ENCODE measurements at regions of chr12 and their contacts with region 1.

Region 1: GRCh38 chr12:76031537-76032073 is at the start of gene PHLDA1:
- DNase-seq: peak; percentile 84 to 86
- ATAC-seq: peak; percentile 73 to 80
- H3K4me3 ChIP-seq: peak within 1 kb of the TSS; percentile 77 to 88 (median 85)
- H3K27ac ChIP-seq: peak within 1 kb of the TSS; percentile 86 to 95 (median 92)
- H3K4me1 ChIP-seq: peaks cover 8 to 20% of the 10 kb centered on the region in 2 donors
- H3K27me3 ChIP-seq: peaks cover 0 to 40% (median 22%) of the 10 kb centered on the region in 3 donors
- CTCF ChIP-seq: peak; percentile 29 to 63 (median 55)
- POLR2A ChIP-seq: peak; percentile 64 to 91
- total RNA-seq, gene PHLDA1: 2.4 to 32.7 (median 7.9) TPM

Region 2: DNA sequence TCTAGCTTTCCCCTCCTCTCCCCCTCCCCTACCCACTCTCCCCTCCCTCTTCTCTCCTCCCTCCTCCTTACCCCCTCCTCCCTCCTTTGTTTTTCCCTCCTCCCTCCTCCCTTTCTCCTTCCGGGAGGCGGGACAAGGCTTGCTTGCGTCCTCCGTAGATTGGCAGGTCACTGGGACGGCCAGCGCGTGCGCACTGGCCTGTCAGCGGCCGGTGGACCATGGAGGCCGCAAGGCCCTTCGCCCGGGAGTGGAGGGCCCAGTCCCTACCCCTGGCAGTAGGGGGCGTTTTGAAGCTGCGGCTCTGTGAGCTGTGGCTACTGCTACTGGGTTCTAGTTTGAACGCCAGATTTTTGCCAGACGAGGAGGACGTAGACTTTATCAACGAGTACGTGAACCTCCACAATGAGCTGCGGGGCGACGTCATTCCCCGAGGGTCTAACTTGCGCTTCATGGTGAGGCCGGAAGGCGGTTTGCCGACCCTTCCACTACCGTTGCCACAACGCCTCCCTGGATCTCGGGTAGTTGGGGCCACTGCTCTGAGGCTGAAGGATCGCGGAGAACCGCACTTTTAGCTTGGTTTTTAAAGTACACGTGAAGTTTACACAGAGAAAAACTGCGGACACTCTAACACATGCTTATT is 640.6 kb before region 1 on chr12 and contains the start of gene GLIPR1L2:
- in situ Hi-C with region 1: loop called in 1 of 4 experiments (anchors 25 kb)
- intact Hi-C with region 1: no loop called
- DNase-seq: peak; percentile 90 to 95
- ATAC-seq: peak; percentile 96 to 98
- H3K4me3 ChIP-seq: peak within 1 kb of the TSS; percentile 65 to 84 (median 76)
- H3K27ac ChIP-seq: peak within 1 kb of the TSS; percentile 84 to 93 (median 90)
- H3K4me1 ChIP-seq: peaks cover 23 to 24% of the 10 kb centered on the region in 2 donors
- H3K27me3 ChIP-seq: no peaks in the 10 kb centered on the region
- CTCF ChIP-seq: peak; percentile 73 to 86 (median 79)
- POLR2A ChIP-seq: peak; percentile 68 to 77
- total RNA-seq, gene GLIPR1L2: 0.33 to 1.0 (median 0.49) TPM in 3 of 4 donors, not detected in the other

Region 3: GRCh38 chr12:75526655-75527511 is 504.7 kb before region 1 on chr12:
- in situ Hi-C with region 1: loop called (anchors 5 to 25 kb)
- intact Hi-C with region 1: no loop called
- DNase-seq: no peak
- ATAC-seq: no peak
- H3K4me3 ChIP-seq: no peak overlapping the region
- H3K27ac ChIP-seq: no peak overlapping the region
- H3K4me1 ChIP-seq: no peaks in the 10 kb centered on the region
- H3K27me3 ChIP-seq: no peaks in the 10 kb centered on the region
- CTCF ChIP-seq: peak; percentile 25 to 61 (median 46)
- POLR2A ChIP-seq: no peak

Region 4: GRCh38 chr12:75981247-75982168 is 50.1 kb before region 1 on chr12:
- in situ Hi-C with region 1: no loop called
- intact Hi-C with region 1: loop called (anchors 5 kb)
- DNase-seq: no peak
- ATAC-seq: no peak
- H3K4me3 ChIP-seq: no peak overlapping the region
- H3K27ac ChIP-seq: peak overlapping the region in 3 of 4 donors; percentile 18 to 33 (median 27)
- H3K4me1 ChIP-seq: peaks cover 8 to 13% of the 10 kb centered on the region in 2 donors
- H3K27me3 ChIP-seq: no peaks in the 10 kb centered on the region
- CTCF ChIP-seq: no peak
- POLR2A ChIP-seq: no peak

Region 5: DNA sequence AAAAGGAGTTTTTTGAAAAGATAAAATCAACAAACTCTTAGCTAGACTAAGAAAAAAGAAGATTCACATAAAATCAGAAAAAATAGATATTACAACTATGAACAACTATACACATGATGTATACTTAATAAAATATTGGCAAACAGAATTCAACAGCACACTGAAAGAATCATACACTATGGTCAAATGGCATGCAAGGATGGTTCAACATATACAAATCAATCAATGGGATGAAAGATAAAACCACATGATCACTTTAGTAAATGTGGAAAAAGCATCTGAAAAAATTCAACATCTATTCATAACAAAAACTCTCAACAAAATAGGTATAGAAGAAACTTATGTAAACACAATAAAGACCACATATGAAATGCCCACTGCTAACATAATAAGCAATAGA is 401.1 kb after region 1 on chr12:
- in situ Hi-C with region 1: no loop called
- intact Hi-C with region 1: no loop called
- DNase-seq: no peak
- ATAC-seq: no peak
- H3K4me3 ChIP-seq: no peak overlapping the region
- H3K27ac ChIP-seq: no peak overlapping the region
- H3K4me1 ChIP-seq: peaks cover 0 to 17% of the 10 kb centered on the region in 2 donors
- H3K27me3 ChIP-seq: no peaks in the 10 kb centered on the region
- CTCF ChIP-seq: no peak
- POLR2A ChIP-seq: no peak

Region 6: GRCh38 chr12:76455582-76456345 is 424.2 kb after region 1 on chr12:
- in situ Hi-C with region 1: no loop called
- intact Hi-C with region 1: loop called (anchors 10 kb)
- DNase-seq: no peak
- ATAC-seq: peak; percentile 76 to 95
- H3K4me3 ChIP-seq: no peak overlapping the region
- H3K27ac ChIP-seq: peak overlapping the region in 2 of 4 donors; percentile 5 to 44
- H3K4me1 ChIP-seq: peaks cover 10 to 17% of the 10 kb centered on the region in 2 donors
- H3K27me3 ChIP-seq: no peaks in the 10 kb centered on the region
- CTCF ChIP-seq: peak in 4 of 5 experiments; percentile 25 to 68 (median 54)
- POLR2A ChIP-seq: no peak

Region 7: GRCh38 chr12:76508178-76508577 is 476.6 kb after region 1 on chr12:
- in situ Hi-C with region 1: no loop called
- intact Hi-C with region 1: no loop called
- DNase-seq: no peak
- ATAC-seq: no peak
- H3K4me3 ChIP-seq: no peak overlapping the region
- H3K27ac ChIP-seq: no peak overlapping the region
- H3K4me1 ChIP-seq: no peaks in the 10 kb centered on the region
- H3K27me3 ChIP-seq: no peaks in the 10 kb centered on the region
- CTCF ChIP-seq: no peak
- POLR2A ChIP-seq: no peak